ENCODE measurements at regions of chr2 and their contacts with region 1.

Region 1: DNA sequence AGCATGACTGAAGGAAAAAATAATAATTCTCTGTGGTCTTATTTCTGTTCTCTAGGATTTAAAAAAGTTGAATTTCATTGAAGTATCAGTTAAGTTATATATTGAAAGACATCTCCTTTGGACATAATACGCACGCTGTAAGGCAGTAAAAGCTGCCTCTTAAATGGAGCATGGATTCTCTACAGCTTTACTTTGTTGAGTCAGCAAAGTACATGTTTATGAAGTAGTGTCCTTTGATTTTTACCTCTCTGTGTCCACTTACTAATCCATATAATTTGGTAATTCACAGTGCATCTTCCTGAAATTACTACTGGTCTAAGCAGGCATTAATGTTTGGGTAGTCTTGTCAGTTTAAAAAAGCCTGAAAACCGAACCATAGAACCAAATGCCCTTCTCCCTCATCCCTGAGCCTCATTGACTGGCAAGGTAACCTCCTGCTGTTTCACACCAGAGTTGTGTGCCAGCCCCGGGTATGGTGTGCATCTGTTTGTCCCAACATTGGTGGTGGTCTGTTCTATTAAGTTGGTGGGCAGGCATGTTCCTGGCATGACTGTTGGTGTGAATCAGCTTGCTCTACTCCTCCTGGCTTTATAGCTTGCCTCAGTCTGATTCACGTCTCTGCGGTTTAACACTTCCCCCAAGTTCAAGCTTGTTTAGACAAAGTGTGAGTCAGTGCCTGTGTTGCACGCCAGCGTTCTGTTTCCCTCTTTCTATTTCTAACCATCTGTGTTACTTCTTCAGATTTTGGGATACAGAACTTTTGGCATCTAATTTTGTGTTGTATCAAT is 71.0 kb upstream of the ITM2C start:
- DNase-seq: peak; percentile 76
- H3K4me3 Mint-ChIP-seq: peak overlapping the region; percentile 67
- H3K27ac Mint-ChIP-seq: peak overlapping the region; percentile 97
- H3K4me1 Mint-ChIP-seq: peaks cover 25% of the 10 kb centered on the region
- H3K27me3 Mint-ChIP-seq: no peaks in the 10 kb centered on the region
- CTCF ChIP-seq: no peak

Region 2: GRCh38 chr2:230068016-230068650 is 725.6 kb before region 1 on chr2:
- CTCF ChIA-PET with region 1: no interaction called
- intact Hi-C with region 1: no loop called
- DNase-seq: peak; percentile 78
- H3K4me3 Mint-ChIP-seq: peak overlapping the region; percentile 71
- H3K27ac Mint-ChIP-seq: peak overlapping the region; percentile 26
- H3K4me1 Mint-ChIP-seq: peaks cover 12% of the 10 kb centered on the region
- H3K27me3 Mint-ChIP-seq: no peaks in the 10 kb centered on the region
- CTCF ChIP-seq: no peak

Region 3: DNA sequence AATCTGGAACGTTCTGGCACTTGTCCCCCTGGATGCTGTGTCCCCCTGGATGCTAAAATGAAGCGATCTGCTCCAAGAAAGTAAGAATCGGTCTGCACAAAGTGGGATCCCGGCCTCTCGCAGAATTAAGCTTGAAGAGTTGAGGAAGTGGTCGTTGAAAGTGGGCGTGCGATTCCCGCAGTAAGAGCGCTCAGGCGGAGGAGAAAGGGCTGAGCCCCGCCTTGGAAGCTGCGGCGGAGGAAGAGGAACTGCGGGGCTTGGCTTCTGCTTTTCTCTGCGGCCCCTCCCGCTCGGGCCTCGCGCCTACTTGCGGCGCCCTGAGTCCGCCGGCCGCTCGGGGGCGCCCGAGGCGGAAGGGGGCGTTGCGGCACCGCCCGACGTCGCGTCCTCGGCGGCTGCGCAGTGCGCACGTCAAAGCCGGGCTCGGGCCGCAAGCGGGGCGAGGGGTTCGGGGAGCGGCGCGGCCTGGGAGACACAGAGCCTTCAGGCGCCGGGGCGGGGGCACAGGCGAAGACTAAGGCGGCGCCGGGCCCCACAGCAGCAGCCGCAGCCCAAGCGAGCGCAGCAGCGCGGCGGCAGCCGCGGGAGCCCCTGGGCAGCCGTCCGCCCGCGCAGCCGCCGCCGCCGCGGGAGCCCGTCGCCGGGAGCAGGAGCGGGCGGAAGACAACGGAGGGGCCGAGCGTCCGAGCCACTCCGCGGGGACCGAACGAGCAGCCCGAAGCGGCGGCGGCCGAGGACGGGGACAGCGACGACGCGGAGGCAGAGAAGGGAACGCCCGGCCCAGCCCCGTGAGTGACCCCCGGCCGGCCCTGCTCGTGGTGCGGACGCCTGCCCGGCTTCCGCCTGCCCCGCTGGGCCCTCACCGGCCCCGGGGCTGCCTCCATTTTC is 81.1 kb before region 1 on chr2 and contains the start of gene CAB39:
- CTCF ChIA-PET with region 1: interaction called, 16 read pairs
- intact Hi-C with region 1: loop called (anchors 2 kb)
- DNase-seq: peak; percentile 92
- H3K4me3 Mint-ChIP-seq: peak within 1 kb of the TSS; percentile 94
- H3K27ac Mint-ChIP-seq: peak within 1 kb of the TSS; percentile 90
- H3K4me1 Mint-ChIP-seq: peaks cover 28% of the 10 kb centered on the region
- H3K27me3 Mint-ChIP-seq: no peaks in the 10 kb centered on the region
- CTCF ChIP-seq: peak; percentile 74
- total RNA-seq, gene CAB39: 84.9 and 88.7 TPM in 2 replicates

Region 4: DNA sequence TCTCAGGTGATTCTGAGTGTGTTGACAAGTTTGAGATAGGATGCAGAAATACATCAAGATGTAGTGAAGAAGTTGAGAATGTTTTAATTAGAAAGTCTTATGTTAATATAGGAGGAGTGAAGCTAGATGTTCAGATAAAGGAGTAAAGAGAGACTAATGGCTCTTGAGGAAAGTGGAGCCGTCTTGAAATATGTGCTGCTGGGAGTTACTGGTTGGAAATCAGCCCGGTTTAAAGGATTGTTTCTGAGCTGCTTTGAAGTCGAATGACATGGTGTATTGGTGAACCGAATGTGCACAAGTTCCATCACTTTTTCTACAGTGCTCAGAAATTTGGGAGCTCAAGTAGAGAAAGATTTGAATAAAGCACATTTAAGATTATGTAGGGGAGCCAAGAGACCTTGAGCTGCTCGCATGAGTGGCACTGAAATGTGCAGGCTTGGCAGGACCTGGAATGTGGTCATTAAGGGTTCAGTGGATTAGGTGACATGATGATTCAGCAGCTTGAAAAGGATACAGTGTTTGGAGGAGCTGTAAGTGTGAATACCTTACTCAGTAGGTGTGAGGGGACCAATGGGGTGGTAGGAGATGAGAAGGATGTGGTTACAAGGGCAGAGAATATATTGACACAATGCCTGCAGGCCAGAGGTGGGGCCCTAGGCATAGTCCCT is 12.5 kb before region 1 on chr2:
- CTCF ChIA-PET with region 1: interaction called, 17 read pairs
- intact Hi-C with region 1: loop called (anchors 2 kb)
- DNase-seq: peak; percentile 72
- H3K4me3 Mint-ChIP-seq: peak overlapping the region; percentile 41
- H3K27ac Mint-ChIP-seq: peak overlapping the region; percentile 87
- H3K4me1 Mint-ChIP-seq: peaks cover 74% of the 10 kb centered on the region
- H3K27me3 Mint-ChIP-seq: no peaks in the 10 kb centered on the region
- CTCF ChIP-seq: no peak